Left lung (tissue), 14 donors: ENCODE measurements at regions of chr4 and their contacts with region 1.

Region 1: DNA sequence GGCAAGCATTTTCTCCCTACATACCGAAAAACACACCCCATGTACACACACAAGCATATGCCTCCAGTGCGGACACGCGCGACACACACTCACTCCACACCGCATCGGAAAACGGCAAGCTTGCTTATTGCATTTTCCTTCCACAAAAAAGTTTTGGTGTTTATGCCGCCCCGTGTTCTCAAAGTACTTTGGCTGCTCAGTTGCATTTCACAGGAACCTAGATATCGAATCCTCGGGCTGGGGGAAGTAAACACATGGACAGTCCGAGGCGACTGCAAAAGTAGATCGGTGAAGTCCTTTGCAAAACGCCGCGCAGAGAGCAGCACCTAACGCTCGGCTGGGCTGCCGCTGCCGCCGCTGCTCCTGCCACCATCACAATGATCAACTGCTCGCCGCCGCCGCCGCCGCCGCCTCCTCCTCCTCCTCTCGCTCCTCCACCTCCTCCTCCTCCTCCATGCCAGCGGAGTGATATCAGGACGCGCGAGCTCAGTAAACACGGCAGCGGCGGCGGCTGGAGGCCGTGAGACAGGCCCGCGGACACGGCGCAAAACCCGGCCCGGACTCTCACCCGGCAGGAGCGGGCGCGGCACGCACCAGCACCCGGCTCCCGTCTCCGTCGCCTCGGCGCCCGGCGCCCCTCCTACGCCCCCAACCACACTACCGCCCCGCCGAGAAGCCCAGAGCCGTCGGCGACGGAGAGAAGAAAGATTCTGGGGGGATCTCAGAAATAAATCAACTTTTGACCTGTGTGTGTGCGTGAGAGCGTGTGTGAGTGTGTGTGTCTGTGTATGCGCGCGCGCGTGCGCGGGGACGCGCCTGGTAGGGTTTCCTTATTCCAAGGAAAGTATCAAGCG is at the start of gene MAML3:
- DNase-seq: peak; percentile 94 to 98 (median 96)
- ATAC-seq: peak; percentile 61
- H3K4me3 ChIP-seq: peak within 1 kb of the TSS; percentile 53 to 69
- H3K27ac ChIP-seq: peak within 1 kb of the TSS; percentile 97 to 99
- H3K4me1 ChIP-seq: peaks cover 4 to 40% of the 10 kb centered on the region in 2 donors
- H3K27me3 ChIP-seq: no peaks in the 10 kb centered on the region
- CTCF ChIP-seq: no peak
- polyA plus RNA-seq, gene MAML3: 16.6 to 18.7 (median 17.1) TPM

Region 2: DNA sequence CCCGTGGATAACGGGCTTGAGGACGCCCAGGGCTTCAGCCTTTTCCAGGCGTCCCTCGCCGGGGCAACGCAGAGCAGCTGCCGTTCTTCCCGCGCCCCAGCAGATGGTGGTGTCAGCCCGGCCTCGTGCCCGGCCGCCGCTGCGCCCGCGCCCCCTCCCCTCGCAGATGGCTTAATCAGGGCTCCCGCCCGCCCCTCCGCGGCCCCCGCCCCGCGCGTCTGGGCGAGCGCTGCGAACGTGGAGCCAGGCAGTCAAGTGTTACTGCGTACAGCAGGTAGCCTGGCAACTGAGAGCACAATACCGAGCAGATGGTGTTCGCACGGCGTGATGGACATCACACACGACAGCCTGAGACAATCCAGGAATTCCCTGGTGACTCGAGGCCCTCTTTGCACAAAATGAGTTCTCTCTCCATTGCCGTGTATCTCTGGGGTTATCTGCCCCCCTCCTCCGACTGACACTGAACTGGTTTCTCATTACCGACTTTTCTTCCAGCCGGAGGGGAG is 419.0 kb before region 1 on chr4:
- intact Hi-C with region 1: loop called in 1 of 2 experiments (anchors 5 kb)
- DNase-seq: peak; percentile 89 to 96 (median 92)
- ATAC-seq: peak; percentile 99
- H3K4me3 ChIP-seq: peak overlapping the region; percentile 31 to 45
- H3K27ac ChIP-seq: peak overlapping the region; percentile 86 to 87
- H3K4me1 ChIP-seq: peaks cover 11 to 52% of the 10 kb centered on the region in 2 donors
- H3K27me3 ChIP-seq: peaks cover 0 to 12% of the 10 kb centered on the region in 2 donors
- CTCF ChIP-seq: peak; percentile 79

Region 3: GRCh38 chr4:140052050-140052449 is 101.9 kb before region 1 on chr4:
- intact Hi-C with region 1: loop called in 1 of 2 experiments (anchors 5 kb)
- DNase-seq: peak in 1 of 4 donors; percentile 48
- ATAC-seq: peak; percentile 60
- H3K4me3 ChIP-seq: no peak overlapping the region
- H3K27ac ChIP-seq: no peak overlapping the region
- H3K4me1 ChIP-seq: peaks cover 0 to 41% of the 10 kb centered on the region in 2 donors
- H3K27me3 ChIP-seq: no peaks in the 10 kb centered on the region
- CTCF ChIP-seq: peak in 1 of 2 donors; percentile 51